Ascending aorta (tissue), 2 donors: ENCODE measurements at regions of chr15 and their contacts with region 1.

Region 1: GRCh38 chr15:56869573-56869972 is 48.9 kb upstream of the TCF12 start:
- DNase-seq: no peak
- H3K4me3 ChIP-seq: no peak overlapping the region
- H3K27ac ChIP-seq: no peak overlapping the region
- H3K4me1 ChIP-seq: peaks cover 7 to 10% of the 10 kb centered on the region in 2 donors
- H3K27me3 ChIP-seq: no peaks in the 10 kb centered on the region
- CTCF ChIP-seq: peak in 2 of 3 experiments; percentile 29 to 49

Region 2: DNA sequence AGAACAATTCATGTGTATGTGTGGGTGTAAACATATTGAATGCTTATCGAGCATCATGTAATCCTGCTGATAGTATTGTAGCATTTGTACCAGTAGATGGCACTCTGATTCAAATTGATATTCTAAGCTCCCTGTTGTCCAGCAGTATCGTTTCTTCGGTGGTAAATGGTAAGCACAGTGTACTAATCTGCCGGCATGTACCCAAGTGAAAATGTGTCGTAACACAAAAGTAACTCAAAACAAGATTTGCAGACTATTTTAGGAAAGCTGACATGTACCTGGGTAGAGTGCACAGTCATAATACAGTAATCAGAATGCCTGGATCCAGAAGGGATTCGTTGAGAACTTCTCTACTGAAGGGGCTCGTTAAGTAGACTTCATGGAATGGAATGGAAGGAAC is 372.9 kb before region 1 on chr15:
- intact Hi-C with region 1: loop called (anchors 5 kb)
- DNase-seq: no peak
- H3K4me3 ChIP-seq: peak overlapping the region in 1 of 2 donors; percentile 44
- H3K27ac ChIP-seq: no peak overlapping the region
- H3K4me1 ChIP-seq: no peaks in the 10 kb centered on the region
- H3K27me3 ChIP-seq: no peaks in the 10 kb centered on the region
- CTCF ChIP-seq: peak; percentile 41 to 72 (median 47)

Region 3: DNA sequence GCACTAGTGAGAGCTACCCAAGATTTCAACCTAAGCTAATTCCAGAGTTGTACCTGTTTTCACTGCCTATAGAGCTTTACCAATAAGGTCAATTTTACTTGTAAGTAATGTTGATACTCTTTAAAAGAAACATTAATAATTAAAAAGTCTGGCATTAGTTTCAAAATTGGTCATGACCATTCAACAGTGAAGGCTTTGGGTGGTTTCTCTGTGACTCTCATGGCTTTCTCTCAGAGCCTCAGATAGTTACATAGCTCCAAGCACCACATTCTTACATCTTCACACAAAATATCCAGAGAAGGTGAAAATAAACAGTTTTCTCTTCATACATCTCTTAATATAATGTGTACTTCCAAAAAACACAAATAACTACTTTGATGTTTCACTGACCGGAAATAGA is 12.6 kb before region 1 on chr15:
- intact Hi-C with region 1: no loop called
- DNase-seq: no peak
- H3K4me3 ChIP-seq: no peak overlapping the region
- H3K27ac ChIP-seq: no peak overlapping the region
- H3K4me1 ChIP-seq: no peaks in the 10 kb centered on the region
- H3K27me3 ChIP-seq: no peaks in the 10 kb centered on the region
- CTCF ChIP-seq: no peak